Activated CD4-positive, alpha-beta memory T cell treated with anti-CD3 and anti-CD28 coated beads for 36 hours (primary cell): ENCODE measurements at regions of chr17 and their contacts with region 1.

Region 1: GRCh38 chr17:28902819-28903545 is at the start of gene DHRS13:
- DNase-seq: peak; percentile 94
- H3K4me3 Mint-ChIP-seq: peak within 1 kb of the TSS; percentile 97
- H3K27ac Mint-ChIP-seq: peak within 1 kb of the TSS; percentile 89
- H3K4me1 Mint-ChIP-seq: peaks cover 27% of the 10 kb centered on the region
- H3K27me3 Mint-ChIP-seq: no peaks in the 10 kb centered on the region
- total RNA-seq, gene DHRS13: 18.0 to 20.6 TPM

Region 2: GRCh38 chr17:28675980-28676379 is 227.0 kb before region 1 on chr17:
- CTCF ChIA-PET with region 1: no interaction called
- POLR2A ChIA-PET with region 1: no interaction called
- intact Hi-C with region 1: no loop called
- DNase-seq: peak; percentile 20
- H3K4me3 Mint-ChIP-seq: no peak overlapping the region
- H3K27ac Mint-ChIP-seq: no peak overlapping the region
- H3K4me1 Mint-ChIP-seq: no peaks in the 10 kb centered on the region
- H3K27me3 Mint-ChIP-seq: no peaks in the 10 kb centered on the region

Region 3: GRCh38 chr17:28812091-28812747 is 90.8 kb before region 1 on chr17:
- CTCF ChIA-PET with region 1: interaction called, 11 read pairs
- POLR2A ChIA-PET with region 1: no interaction called
- intact Hi-C with region 1: loop called (anchors 1 kb)
- DNase-seq: peak; percentile 98
- H3K4me3 Mint-ChIP-seq: peak overlapping the region; percentile 82
- H3K27ac Mint-ChIP-seq: peak overlapping the region; percentile 92
- H3K4me1 Mint-ChIP-seq: peaks cover 43% of the 10 kb centered on the region
- H3K27me3 Mint-ChIP-seq: no peaks in the 10 kb centered on the region

Region 4: GRCh38 chr17:28849281-28849680 is 53.7 kb before region 1 on chr17:
- CTCF ChIA-PET with region 1: interaction called, 19 read pairs
- POLR2A ChIA-PET with region 1: no interaction called
- intact Hi-C with region 1: loop called (anchors 2 kb)
- DNase-seq: peak; percentile 43
- H3K4me3 Mint-ChIP-seq: no peak overlapping the region
- H3K27ac Mint-ChIP-seq: no peak overlapping the region
- H3K4me1 Mint-ChIP-seq: peaks cover 4% of the 10 kb centered on the region
- H3K27me3 Mint-ChIP-seq: no peaks in the 10 kb centered on the region

Region 5: GRCh38 chr17:28892024-28892423 is 11.0 kb before region 1 on chr17:
- CTCF ChIA-PET with region 1: interaction called, 17 read pairs
- POLR2A ChIA-PET with region 1: interaction called, 5 read pairs
- intact Hi-C with region 1: no loop called
- DNase-seq: no peak
- H3K4me3 Mint-ChIP-seq: no peak overlapping the region
- H3K27ac Mint-ChIP-seq: peak overlapping the region; percentile 82
- H3K4me1 Mint-ChIP-seq: peaks cover 56% of the 10 kb centered on the region
- H3K27me3 Mint-ChIP-seq: no peaks in the 10 kb centered on the region

Region 6: GRCh38 chr17:28916302-28916934 is 13.4 kb after region 1 on chr17:
- CTCF ChIA-PET with region 1: interaction called, 17 read pairs
- POLR2A ChIA-PET with region 1: no interaction called
- intact Hi-C with region 1: no loop called
- DNase-seq: peak; percentile 56
- H3K4me3 Mint-ChIP-seq: no peak overlapping the region
- H3K27ac Mint-ChIP-seq: no peak overlapping the region
- H3K4me1 Mint-ChIP-seq: peaks cover 14% of the 10 kb centered on the region
- H3K27me3 Mint-ChIP-seq: no peaks in the 10 kb centered on the region

Region 7: GRCh38 chr17:28925912-28926365 is 23.0 kb after region 1 on chr17:
- CTCF ChIA-PET with region 1: interaction called, 10 read pairs
- POLR2A ChIA-PET with region 1: no interaction called
- intact Hi-C with region 1: no loop called
- DNase-seq: peak; percentile 53
- H3K4me3 Mint-ChIP-seq: peak overlapping the region; percentile 50
- H3K27ac Mint-ChIP-seq: peak overlapping the region; percentile 87
- H3K4me1 Mint-ChIP-seq: peaks cover 59% of the 10 kb centered on the region
- H3K27me3 Mint-ChIP-seq: no peaks in the 10 kb centered on the region

Region 8: DNA sequence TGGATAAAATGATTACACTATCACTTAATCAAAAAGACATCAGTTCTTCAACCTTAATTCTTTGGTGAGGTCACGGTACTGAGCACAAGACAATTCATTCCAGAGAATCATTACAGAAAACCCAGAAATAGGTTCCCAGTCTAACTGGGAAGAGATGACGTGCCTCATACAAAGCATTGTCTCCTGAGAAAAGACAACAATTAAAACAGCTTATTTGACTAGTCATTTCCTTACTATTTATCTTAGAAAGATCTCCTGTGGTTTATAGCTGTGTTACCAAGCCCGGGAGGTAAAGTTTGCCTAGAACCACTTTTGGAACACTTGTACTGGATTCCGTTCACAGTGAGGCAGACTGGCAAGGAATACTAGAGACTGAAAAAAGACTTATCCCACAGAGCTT is 43.3 kb after region 1 on chr17:
- CTCF ChIA-PET with region 1: interaction called, 14 read pairs
- POLR2A ChIA-PET with region 1: interaction called, 10 read pairs
- intact Hi-C with region 1: loop called (anchors 1 kb)
- DNase-seq: no peak
- H3K4me3 Mint-ChIP-seq: peak overlapping the region; percentile 36
- H3K27ac Mint-ChIP-seq: peak overlapping the region; percentile 68
- H3K4me1 Mint-ChIP-seq: peaks cover 68% of the 10 kb centered on the region
- H3K27me3 Mint-ChIP-seq: no peaks in the 10 kb centered on the region

Region 9: DNA sequence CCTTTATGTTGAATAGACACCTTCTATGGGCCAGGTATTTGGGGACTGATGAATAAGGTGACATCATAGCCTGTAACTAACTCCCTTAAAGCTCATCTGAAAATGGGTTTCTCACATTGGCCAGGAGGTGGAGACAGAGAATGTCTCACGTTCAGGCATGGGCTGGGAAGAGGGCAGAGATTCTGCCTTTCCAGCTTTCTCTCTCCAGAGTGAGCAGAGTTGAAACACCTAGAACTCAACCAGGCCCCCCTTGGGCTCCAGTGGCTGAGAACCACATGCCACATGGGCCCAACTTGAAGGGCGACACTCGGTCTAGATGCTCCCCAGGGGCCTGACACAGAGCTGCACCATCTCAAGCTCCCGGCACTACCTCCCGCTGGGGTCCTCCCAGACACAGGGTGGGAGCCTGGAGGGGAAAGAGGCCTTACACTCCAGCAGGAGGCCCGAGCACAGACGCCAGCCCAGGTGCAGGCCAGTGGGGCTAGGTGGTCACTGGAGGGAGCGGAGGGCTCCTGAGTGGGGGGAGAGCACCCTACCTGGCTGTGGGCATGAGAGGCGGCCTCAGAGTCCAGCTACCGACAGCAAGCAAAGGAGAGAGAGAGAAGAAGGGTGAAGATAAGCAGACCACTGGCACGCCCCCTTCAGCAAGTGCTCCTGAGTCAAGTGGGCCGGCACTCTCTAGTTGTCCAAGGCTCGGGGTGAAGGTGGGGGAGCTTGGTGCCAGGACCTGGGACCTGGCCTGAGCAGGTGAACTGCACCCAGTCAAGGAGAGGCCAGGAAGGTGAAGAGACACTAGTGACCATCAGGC is 221.3 kb after region 1 on chr17:
- CTCF ChIA-PET with region 1: no interaction called
- POLR2A ChIA-PET with region 1: no interaction called
- intact Hi-C with region 1: no loop called
- DNase-seq: peak; percentile 60
- H3K4me3 Mint-ChIP-seq: no peak overlapping the region
- H3K27ac Mint-ChIP-seq: no peak overlapping the region
- H3K4me1 Mint-ChIP-seq: no peaks in the 10 kb centered on the region
- H3K27me3 Mint-ChIP-seq: no peaks in the 10 kb centered on the region

Region 10: DNA sequence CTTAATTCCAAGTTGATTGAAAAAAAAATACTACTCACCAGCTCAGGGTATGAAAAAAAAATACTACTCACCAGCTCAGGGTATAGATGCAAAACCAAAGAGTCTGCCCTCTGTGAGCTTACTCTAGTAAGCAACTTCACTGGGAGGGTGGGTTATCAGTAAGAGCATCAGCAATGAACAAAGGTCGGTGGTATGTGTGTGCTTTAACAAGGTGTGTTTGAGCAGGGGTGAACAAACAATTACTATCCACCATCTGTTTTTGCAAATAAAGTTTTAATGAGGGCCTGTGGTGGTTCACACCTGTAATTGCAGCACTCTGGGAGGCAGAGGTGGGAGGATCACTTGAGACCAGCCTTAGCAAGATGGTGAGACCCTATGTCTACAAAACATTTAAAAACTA is 370.9 kb after region 1 on chr17:
- CTCF ChIA-PET with region 1: no interaction called
- POLR2A ChIA-PET with region 1: no interaction called
- intact Hi-C with region 1: no loop called
- DNase-seq: no peak
- H3K4me3 Mint-ChIP-seq: no peak overlapping the region
- H3K27ac Mint-ChIP-seq: no peak overlapping the region
- H3K4me1 Mint-ChIP-seq: peaks cover 60% of the 10 kb centered on the region
- H3K27me3 Mint-ChIP-seq: no peaks in the 10 kb centered on the region

Region 11: DNA sequence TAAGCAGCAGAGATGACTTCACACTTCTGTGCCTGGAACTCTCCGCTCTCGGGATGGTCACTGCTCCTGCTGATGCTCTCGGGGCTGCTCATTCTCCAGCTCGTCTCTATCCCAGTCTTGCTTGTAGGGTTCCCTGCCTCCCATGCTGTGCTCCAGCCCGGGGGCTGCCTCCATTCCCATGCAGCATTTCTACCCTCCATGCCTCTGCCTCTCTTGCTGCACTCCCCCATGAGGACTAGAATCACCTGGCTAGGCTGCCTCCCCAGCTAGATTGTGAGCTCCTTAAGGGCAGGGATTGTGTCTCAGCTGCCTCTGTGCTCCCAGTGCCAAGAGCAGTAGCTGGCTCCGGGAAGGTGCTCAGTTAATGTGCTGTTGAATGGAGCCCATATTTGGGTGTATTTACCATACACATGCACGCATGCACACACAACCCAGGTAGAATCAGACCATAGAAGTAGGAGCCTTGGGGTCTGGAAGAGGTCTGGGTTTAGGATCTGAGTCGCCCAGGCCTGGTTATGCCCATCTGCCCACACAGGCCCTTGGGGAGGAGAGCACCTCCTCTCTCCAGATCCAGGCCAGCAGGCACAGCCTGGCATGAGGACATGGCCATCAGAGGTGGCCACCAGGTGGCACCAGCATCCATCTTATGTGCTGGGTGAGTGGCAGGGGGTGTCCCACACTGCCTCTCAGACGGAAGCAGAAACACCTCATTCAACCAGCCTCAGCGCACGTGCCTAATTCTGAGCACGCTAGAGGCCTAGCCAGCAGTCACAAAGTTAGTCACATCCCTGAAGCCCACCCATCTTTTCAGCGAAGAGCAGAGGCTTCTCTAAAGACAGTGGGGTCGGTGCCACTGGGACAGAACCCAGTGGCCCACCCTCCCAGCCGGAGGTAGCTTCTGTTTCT is 677.1 kb after region 1 on chr17:
- CTCF ChIA-PET with region 1: no interaction called
- POLR2A ChIA-PET with region 1: no interaction called
- intact Hi-C with region 1: no loop called
- DNase-seq: peak; percentile 94
- H3K4me3 Mint-ChIP-seq: no peak overlapping the region
- H3K27ac Mint-ChIP-seq: peak overlapping the region; percentile 47
- H3K4me1 Mint-ChIP-seq: peaks cover 12% of the 10 kb centered on the region
- H3K27me3 Mint-ChIP-seq: no peaks in the 10 kb centered on the region